Transverse colon (tissue), 4 donors: ENCODE measurements at regions of chr3 and their contacts with region 1.

Region 1: GRCh38 chr3:179927191-179927590 is 109.5 kb downstream of the PEX5L start:
- DNase-seq: no peak
- H3K4me3 ChIP-seq: no peak overlapping the region
- H3K27ac ChIP-seq: no peak overlapping the region
- H3K4me1 ChIP-seq: no peaks in the 10 kb centered on the region
- H3K27me3 ChIP-seq: no peaks in the 10 kb centered on the region
- CTCF ChIP-seq: no peak
- EP300 ChIP-seq: no peak
- POLR2A ChIP-seq: no peak

Region 2: DNA sequence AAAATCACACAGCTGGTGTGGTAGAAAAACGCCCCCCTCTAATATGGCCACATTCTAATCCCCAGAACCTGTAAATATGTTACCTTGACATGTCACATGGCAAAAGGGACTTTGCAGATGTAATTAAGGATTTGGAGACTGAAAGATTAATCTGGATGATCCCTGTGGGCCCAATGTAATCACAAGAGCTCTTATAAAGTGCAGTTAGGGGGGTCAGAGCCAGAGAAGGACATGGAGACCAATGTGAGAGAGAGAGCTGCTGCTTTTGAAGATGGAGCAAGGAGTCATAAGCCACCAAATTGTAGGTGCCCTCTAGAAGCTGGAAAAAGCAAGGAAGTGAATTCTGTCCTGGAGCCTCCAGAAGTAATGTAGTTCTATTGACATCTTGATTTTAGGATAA is 43.1 kb before region 1 on chr3:
- in situ Hi-C with region 1: no loop called
- intact Hi-C with region 1: loop called (anchors 1 kb)
- DNase-seq: no peak
- H3K4me3 ChIP-seq: no peak overlapping the region
- H3K27ac ChIP-seq: no peak overlapping the region
- H3K4me1 ChIP-seq: no peaks in the 10 kb centered on the region
- H3K27me3 ChIP-seq: no peaks in the 10 kb centered on the region
- CTCF ChIP-seq: no peak
- EP300 ChIP-seq: no peak
- POLR2A ChIP-seq: no peak

Region 3: DNA sequence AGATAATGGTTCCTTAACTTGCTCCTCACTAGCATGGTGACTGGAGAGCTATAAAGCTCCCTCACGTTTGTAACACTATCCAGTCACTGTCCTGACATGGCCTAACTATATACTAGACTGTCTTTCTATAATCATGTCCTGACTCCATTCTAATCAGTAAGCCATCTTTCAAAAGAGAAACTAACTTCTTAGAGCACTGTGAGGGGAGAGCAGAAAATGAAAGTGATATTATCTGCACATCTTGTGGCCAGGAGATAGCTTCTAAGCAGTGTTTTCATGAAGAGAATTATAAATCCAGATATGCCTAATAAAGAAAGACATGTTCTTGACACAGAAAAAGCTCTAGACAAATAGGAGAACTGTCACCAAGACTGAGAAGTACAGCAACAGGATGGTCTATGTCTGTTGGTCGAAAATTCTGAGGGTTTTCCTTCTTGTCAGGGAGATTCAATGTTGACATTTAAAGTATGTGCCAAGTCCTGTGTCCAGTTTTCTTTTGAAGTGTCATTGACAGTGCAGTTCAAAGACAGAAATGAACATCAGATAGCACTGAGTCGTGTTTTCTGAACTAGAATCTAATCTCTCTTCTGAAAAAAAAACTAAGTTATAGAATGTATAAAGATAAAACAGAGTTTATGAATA is 340.1 kb after region 1 on chr3:
- in situ Hi-C with region 1: no loop called
- intact Hi-C with region 1: no loop called
- DNase-seq: no peak
- H3K4me3 ChIP-seq: no peak overlapping the region
- H3K27ac ChIP-seq: no peak overlapping the region
- H3K4me1 ChIP-seq: no peaks in the 10 kb centered on the region
- H3K27me3 ChIP-seq: no peaks in the 10 kb centered on the region
- CTCF ChIP-seq: no peak
- EP300 ChIP-seq: no peak
- POLR2A ChIP-seq: no peak